ENCODE measurements at regions of chr5 and their contacts with region 1.

Region 1: DNA sequence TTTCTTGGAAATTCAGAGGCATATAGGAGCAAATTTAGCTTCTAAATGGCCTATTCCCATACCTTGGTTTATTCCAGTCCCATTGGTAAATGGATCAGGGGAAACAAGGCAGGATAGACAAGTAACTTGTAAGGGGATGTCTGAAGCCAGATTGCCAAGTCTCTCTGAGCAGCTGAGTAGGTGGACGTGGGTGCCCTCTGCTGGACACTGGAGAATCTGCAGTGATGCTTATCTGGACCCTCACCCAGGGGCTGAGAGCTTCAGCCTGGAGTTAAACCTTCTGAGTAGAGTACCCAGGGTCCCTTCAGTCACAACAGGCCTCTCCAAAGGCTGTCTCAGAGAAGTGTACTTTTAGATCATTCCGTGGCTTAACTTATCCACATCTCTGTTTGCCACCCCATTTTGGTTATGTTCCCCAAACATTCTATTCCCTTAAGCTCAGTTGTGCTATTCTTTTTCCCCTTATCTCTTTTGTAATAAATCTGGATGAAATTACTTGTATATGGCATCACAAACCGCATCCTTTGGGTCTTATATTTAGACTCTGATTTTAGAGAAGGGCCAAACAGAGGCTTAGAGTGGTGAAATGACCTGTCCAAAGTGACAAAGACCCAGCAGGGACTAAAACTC is 218.3 kb upstream of the GLRA1 start:
- DNase-seq: peak; percentile 24
- H3K4me3 ChIP-seq: no peak overlapping the region
- H3K27ac ChIP-seq: no peak overlapping the region
- H3K27me3 ChIP-seq: no peaks in the 10 kb centered on the region
- CTCF ChIP-seq: peak; percentile 90

Region 2: GRCh38 chr5:151451626-151452520 is 691.1 kb before region 1 on chr5:
- CTCF ChIA-PET with region 1: no interaction called
- POLR2A ChIA-PET with region 1: no interaction called
- DNase-seq: peak; percentile 24
- H3K4me3 ChIP-seq: no peak overlapping the region
- H3K27ac ChIP-seq: peak overlapping the region; percentile 70
- H3K27me3 ChIP-seq: no peaks in the 10 kb centered on the region
- CTCF ChIP-seq: no peak

Region 3: DNA sequence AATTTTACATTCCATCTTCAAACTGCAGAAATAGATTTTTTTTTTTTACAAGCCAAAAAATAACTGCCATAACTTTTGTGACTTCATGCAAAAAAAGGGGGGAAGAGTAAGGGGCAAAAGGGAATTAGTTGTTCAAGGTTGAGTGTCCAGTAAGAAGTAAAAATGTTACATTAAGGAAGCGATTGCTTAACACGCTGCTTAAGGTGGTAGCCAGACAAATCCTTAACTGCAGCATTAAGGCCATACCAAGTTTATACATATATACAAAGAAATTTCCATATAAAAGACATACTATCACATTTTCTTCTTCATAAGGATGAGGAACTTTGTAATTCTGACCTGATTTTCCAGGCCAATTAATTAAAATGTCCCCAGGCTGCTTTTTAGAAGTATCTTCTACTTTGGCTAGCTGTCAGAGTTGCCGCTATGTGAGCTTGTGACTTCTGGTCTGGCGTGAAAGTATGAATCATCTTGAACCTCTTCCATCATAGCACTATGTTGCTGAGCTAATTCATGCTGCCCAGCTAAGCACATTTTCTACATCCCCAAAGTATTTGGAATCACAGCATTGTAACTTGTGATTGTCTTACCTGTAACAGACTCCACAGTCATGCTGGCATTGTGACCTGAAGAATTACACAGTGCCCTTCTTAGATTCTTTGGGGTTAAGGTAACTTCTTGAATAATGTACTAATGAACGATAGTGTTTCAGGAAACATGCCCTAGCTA is 331.2 kb before region 1 on chr5:
- CTCF ChIA-PET with region 1: interaction called, 10 read pairs
- POLR2A ChIA-PET with region 1: interaction called, 4 read pairs
- DNase-seq: no peak
- H3K4me3 ChIP-seq: no peak overlapping the region
- H3K27ac ChIP-seq: no peak overlapping the region
- H3K27me3 ChIP-seq: no peaks in the 10 kb centered on the region
- CTCF ChIP-seq: no peak

Region 4: GRCh38 chr5:152124409-152125041 is 18.4 kb before region 1 on chr5:
- CTCF ChIA-PET with region 1: interaction called, 14 read pairs
- POLR2A ChIA-PET with region 1: no interaction called
- DNase-seq: no peak
- H3K4me3 ChIP-seq: no peak overlapping the region
- H3K27ac ChIP-seq: no peak overlapping the region
- H3K27me3 ChIP-seq: no peaks in the 10 kb centered on the region
- CTCF ChIP-seq: no peak

Region 5: GRCh38 chr5:152170350-152170749 is 27.4 kb after region 1 on chr5:
- CTCF ChIA-PET with region 1: interaction called, 13 read pairs
- POLR2A ChIA-PET with region 1: no interaction called
- DNase-seq: no peak
- H3K4me3 ChIP-seq: no peak overlapping the region
- H3K27ac ChIP-seq: no peak overlapping the region
- H3K27me3 ChIP-seq: no peaks in the 10 kb centered on the region
- CTCF ChIP-seq: no peak

Region 6: GRCh38 chr5:152181427-152181826 is 38.5 kb after region 1 on chr5:
- CTCF ChIA-PET with region 1: no interaction called
- POLR2A ChIA-PET with region 1: no interaction called
- DNase-seq: no peak
- H3K4me3 ChIP-seq: no peak overlapping the region
- H3K27ac ChIP-seq: no peak overlapping the region
- H3K27me3 ChIP-seq: no peaks in the 10 kb centered on the region
- CTCF ChIP-seq: no peak

Region 7: GRCh38 chr5:152736906-152737305 is 594.0 kb after region 1 on chr5:
- CTCF ChIA-PET with region 1: no interaction called
- POLR2A ChIA-PET with region 1: no interaction called
- DNase-seq: no peak
- H3K4me3 ChIP-seq: no peak overlapping the region
- H3K27ac ChIP-seq: no peak overlapping the region
- H3K27me3 ChIP-seq: no peaks in the 10 kb centered on the region
- CTCF ChIP-seq: no peak